ENCODE measurements at regions of chr16 and their contacts with region 1.

Region 1: DNA sequence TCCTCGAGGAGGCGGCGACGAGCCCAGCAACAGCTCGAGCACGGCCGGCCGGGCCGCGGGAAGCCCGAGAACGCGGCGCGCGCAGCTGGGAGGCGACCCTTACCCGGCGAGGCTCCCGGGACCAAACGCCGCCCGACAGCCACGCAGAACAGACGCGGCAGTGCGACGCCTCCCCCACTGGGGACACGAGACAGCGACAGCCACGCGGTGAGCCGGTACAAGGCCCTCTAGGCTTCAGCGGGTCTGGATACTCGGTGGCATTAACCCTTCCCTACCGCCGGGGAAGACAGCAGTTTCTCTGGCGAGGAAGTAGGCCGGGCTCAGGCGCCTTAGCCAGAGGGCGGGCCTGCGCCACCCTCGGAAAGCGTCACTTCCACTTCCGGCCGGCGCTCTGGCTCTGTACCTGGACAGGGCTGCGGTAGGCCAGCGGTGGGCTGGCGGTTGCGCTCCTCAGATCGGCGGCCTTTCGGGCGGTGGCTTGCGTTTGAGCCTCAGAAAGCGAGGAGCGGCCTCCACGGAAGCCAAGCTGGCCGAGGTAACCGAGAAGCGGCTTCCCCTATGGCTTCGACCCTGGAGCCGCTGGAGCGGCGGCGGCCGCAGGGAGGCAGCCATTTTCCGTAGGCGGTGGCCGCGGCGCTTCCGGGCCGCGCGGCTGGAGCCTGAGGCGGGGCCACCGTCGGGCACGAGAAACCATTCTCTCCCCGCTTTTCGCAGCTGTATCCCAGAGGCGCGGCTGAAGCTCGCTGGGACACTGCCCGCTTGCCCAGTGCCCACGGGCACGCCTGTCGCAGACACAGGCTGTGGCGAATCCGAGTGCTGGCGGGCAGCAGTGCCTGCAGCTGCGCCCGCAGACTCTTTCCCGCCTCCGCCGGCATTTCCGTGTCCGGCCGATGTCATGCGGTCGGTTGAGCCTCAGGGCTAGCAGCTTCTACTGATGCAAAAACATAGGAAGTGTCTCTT is at the starts of genes TIGD7 and ZNF75A:
- DNase-seq: peak; percentile 92 to 95 (median 95)
- ATAC-seq: peak; percentile 99
- H3K4me3 ChIP-seq: peak within 1 kb of the TSS; percentile 83
- H3K27ac ChIP-seq: peak within 1 kb of the TSS; percentile 97
- H3K4me1 ChIP-seq: no peaks in the 10 kb centered on the region
- H3K27me3 ChIP-seq: no peaks in the 10 kb centered on the region
- total RNA-seq, gene TIGD7: 5.1 to 8.7 (median 6.4) TPM
- total RNA-seq, gene ZNF75A: 19.8 to 23.0 (median 21.5) TPM

Region 2: GRCh38 chr16:3282730-3283524 is 22.5 kb before region 1 on chr16 and contains the start of gene ZNF263:
- intact Hi-C with region 1: loop called in 1 of 4 experiments (anchors 2 kb)
- DNase-seq: peak; percentile 96 to 98 (median 98)
- ATAC-seq: peak; percentile 97 to 98
- H3K4me3 ChIP-seq: peak within 1 kb of the TSS; percentile 92
- H3K27ac ChIP-seq: peak within 1 kb of the TSS; percentile 100
- H3K4me1 ChIP-seq: no peaks in the 10 kb centered on the region
- H3K27me3 ChIP-seq: no peaks in the 10 kb centered on the region
- total RNA-seq, gene ZNF263: 10.5 to 17.8 (median 12.0) TPM

Measured in right cardiac atrium (tissue), 5 donors.